OCI-LY7 (cell line): ENCODE measurements at regions of chr17 and their contacts with region 1.

Region 1: GRCh38 chr17:70060415-70060814 is 14.6 kb upstream of the KCNJ16 start:
- DNase-seq: no peak
- H3K4me3 ChIP-seq: no peak overlapping the region
- H3K27ac ChIP-seq: no peak overlapping the region
- H3K4me1 ChIP-seq: no peaks in the 10 kb centered on the region
- CTCF ChIP-seq: no peak

Region 2: GRCh38 chr17:70168977-70169708 is 108.7 kb after region 1 on chr17 and contains the start of gene KCNJ2:
- CTCF ChIA-PET with region 1: no interaction called
- POLR2A ChIA-PET with region 1: interaction called, 10 read pairs
- intact Hi-C with region 1: no loop called
- DNase-seq: peak; percentile 87
- H3K4me3 ChIP-seq: peak within 1 kb of the TSS; percentile 61
- H3K27ac ChIP-seq: no peak within 1 kb of the TSS
- H3K4me1 ChIP-seq: peaks cover 14% of the 10 kb centered on the region
- CTCF ChIP-seq: no peak
- total RNA-seq, gene KCNJ2: 0.46 and 0.88 TPM in 2 replicates